H1 (cell line): ENCODE measurements at regions of chr2 and their contacts with region 1.

Region 1: GRCh38 chr2:120958623-120959366 is 223.1 kb downstream of the GLI2 start:
- DNase-seq: peak; percentile 17 to 93
- H3K4me3 ChIP-seq: no peak overlapping the region
- H3K27ac ChIP-seq: no peak overlapping the region
- H3K4me1 ChIP-seq: no peaks in the 10 kb centered on the region
- H3K27me3 ChIP-seq: no peaks in the 10 kb centered on the region
- CTCF ChIP-seq: peak in 2 of 3 experiments; percentile 79 to 83; a peak in 3 of 4 replicates
- EP300 ChIP-seq: no peak
- POLR2A ChIP-seq: no peak
- RAD21 ChIP-seq: peak; percentile 78 to 86

Region 2: DNA sequence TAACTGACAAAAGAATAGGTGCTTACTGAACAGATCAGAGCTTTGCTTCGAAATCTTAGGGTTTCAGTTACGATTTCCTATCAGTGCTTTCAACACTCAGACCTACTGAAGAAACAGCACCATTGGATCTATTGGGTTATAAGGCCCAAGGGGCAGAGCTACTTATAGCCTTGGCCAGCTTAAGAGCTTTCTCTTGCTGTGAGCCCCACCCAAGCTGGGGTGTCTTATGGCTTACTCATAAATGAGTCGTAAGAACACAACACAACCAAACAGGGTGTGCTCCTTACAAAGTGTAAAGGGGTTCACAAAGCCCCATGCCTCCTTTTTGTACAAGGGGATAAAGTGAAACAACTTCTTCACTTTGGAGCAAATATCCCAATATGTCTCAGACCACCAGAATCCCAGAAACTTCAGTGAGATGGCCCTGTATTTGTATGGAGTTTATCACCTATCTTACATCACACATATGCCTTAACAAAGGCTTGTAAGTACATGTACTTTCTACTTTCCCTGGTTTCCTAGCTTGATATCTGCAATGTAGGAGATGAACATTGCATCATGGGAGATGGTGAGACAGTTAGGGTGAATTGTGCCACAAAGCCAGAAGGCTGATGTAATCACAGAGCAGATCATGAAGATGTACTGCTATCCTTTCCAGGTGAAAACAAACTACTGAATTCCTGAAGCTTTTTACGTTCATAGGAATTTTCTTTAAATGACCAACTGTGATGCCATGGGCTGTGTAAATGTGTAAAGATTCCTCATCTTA is 338.6 kb before region 1 on chr2:
- CTCF ChIA-PET with region 1: no interaction called
- POLR2A ChIA-PET with region 1: no interaction called
- DNase-seq: no peak
- H3K4me3 ChIP-seq: no peak overlapping the region
- H3K27ac ChIP-seq: no peak overlapping the region
- H3K4me1 ChIP-seq: no peaks in the 10 kb centered on the region
- H3K27me3 ChIP-seq: peaks cover 0 to 8% (median 1%) of the 10 kb centered on the region in 4 experiments; a peak in 1 of 7 replicates
- CTCF ChIP-seq: no peak
- EP300 ChIP-seq: no peak
- POLR2A ChIP-seq: no peak
- RAD21 ChIP-seq: no peak

Region 3: DNA sequence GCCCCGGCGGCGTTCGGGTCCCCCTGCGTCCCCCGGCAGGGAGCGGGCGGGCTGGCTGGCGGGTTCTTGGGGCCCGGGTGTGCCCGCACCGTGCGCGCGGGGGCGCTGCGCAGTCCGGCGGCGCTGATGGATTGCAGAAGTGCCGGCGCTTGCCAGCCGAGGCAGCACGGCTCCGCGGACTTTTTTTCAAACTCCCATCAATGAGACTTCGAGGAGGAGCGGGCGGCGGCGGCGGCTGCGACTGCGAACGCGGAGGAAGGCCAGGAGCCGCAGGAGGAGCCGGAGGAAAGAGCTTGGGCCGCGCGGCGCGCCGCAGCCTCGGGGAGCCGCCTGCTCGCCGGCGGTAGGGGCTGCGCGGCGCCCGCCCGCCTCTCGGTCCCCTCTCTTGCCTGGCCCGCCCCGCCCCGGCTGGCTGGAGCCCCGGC is 223.0 kb before region 1 on chr2 and contains the start of gene GLI2:
- CTCF ChIA-PET with region 1: interaction called, 17 read pairs
- POLR2A ChIA-PET with region 1: no interaction called
- DNase-seq: peak; percentile 50 to 90
- H3K4me3 ChIP-seq: peak within 1 kb of the TSS; percentile 80 to 91 (median 89)
- H3K27ac ChIP-seq: peak within 1 kb of the TSS; percentile 79; the same call in 1 of the 2 replicates
- H3K4me1 ChIP-seq: peaks cover 12 to 24% (median 16%) of the 10 kb centered on the region in 4 experiments
- H3K27me3 ChIP-seq: no peaks in the 10 kb centered on the region; a peak in 1 of 7 replicates
- CTCF ChIP-seq: peak; percentile 66 to 98 (median 83)
- EP300 ChIP-seq: no peak
- POLR2A ChIP-seq: no peak
- RAD21 ChIP-seq: peak; percentile 60 to 78
- total RNA-seq, gene GLI2: 46.9 and 49.8 TPM in 2 replicates

Region 4: DNA sequence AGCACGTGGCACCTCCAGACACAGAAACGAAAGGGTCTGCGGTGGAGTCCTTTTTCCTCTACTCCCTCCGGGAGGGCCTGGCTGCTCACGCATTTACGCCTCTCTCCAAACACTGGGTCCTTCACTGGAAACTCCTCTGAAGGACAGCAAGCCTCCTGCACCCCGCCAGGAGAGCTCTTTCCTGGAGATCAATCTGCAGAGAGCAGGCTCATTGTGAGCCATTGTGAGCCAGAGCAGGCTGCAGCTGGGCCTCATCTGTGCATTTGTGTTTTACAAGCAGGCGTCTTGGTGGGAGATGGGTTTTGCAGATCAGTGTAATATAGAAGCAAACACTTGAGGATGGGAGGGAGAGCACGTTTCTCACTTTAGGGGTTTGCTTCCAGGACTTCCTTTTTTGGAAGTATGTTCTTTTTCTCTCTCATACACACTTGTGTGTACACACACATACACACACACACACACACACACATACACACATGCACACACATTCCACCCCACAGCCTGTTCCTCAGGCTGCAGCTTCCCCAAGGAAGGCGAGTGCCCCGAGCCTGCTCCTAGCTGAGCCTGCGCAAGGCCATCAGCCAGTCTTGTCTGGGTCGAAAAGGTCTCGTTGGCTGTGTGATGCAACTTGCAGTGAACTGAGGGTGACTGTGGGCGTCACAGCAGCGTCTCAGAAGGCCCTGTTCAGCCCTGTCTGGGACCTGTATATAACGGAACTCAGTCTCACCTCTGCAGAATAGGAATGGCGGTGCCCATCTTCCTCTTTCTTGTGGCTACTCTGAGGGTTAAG is 59.6 kb before region 1 on chr2:
- CTCF ChIA-PET with region 1: interaction called, 16 read pairs
- POLR2A ChIA-PET with region 1: no interaction called
- DNase-seq: no peak
- H3K4me3 ChIP-seq: no peak overlapping the region
- H3K27ac ChIP-seq: no peak overlapping the region; the same call in 1 of the 2 replicates
- H3K4me1 ChIP-seq: peaks cover 18 to 44% (median 28%) of the 10 kb centered on the region in 4 experiments
- H3K27me3 ChIP-seq: no peaks in the 10 kb centered on the region; a peak in 1 of 7 replicates
- CTCF ChIP-seq: no peak
- EP300 ChIP-seq: no peak
- POLR2A ChIP-seq: no peak
- RAD21 ChIP-seq: no peak

Region 5: GRCh38 chr2:120934574-120935340 is 24.0 kb before region 1 on chr2:
- CTCF ChIA-PET with region 1: interaction called, 29 read pairs
- POLR2A ChIA-PET with region 1: no interaction called
- DNase-seq: no peak
- H3K4me3 ChIP-seq: no peak overlapping the region
- H3K27ac ChIP-seq: no peak overlapping the region
- H3K4me1 ChIP-seq: peaks cover 0 to 5% (median 3%) of the 10 kb centered on the region in 4 experiments; a peak in 3 of 7 replicates
- H3K27me3 ChIP-seq: no peaks in the 10 kb centered on the region
- CTCF ChIP-seq: no peak
- EP300 ChIP-seq: no peak
- POLR2A ChIP-seq: no peak
- RAD21 ChIP-seq: no peak

Region 6: DNA sequence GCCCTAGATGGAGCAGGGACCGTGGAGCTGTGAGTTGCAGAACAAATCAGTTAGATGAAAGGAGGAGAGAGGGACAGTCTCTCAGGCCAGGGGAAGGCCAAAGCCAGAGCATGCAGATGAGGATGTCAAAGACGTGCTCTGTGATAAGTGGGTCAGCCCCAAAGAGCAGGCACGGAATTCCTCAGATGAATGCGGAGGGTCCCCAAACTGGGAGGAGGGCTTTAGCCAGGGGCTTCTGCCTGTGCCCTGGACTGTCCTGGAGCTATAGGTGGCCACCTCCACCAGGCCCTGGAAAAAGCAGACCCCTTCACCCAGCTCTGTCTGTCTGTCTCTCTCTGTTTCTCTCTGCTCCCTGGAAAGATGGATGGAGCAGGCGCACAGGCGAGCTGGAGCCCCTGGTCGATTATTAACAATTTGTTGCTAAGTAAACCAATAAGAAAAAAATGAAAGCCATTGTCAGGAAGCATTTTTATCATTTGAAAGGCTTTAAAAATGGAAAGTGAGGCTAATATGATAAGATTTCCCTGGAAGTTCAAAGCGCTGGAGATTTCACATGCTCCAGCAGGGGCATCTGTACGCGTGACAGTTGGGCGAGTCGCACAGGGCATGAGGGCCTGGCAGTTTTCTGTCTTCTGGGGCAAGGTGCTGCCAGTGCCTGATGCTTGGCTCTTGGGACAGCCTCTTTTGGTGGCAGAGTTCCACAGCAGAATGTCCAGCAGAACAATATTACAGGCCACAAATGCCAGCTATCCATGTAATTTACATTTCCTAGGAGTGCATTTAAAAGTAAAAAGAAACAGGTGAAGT is 17.9 kb after region 1 on chr2:
- CTCF ChIA-PET with region 1: interaction called, 15 read pairs
- POLR2A ChIA-PET with region 1: interaction called, 4 read pairs
- DNase-seq: no peak
- H3K4me3 ChIP-seq: no peak overlapping the region
- H3K27ac ChIP-seq: no peak overlapping the region
- H3K4me1 ChIP-seq: 0 out of 7 replicates have a peak, but pooled peaks cover 0 to under 1% (median 0%) of the 10 kb centered on the region in 4 experiments
- H3K27me3 ChIP-seq: no peaks in the 10 kb centered on the region
- CTCF ChIP-seq: no peak
- EP300 ChIP-seq: no peak
- POLR2A ChIP-seq: no peak
- RAD21 ChIP-seq: no peak

Region 7: DNA sequence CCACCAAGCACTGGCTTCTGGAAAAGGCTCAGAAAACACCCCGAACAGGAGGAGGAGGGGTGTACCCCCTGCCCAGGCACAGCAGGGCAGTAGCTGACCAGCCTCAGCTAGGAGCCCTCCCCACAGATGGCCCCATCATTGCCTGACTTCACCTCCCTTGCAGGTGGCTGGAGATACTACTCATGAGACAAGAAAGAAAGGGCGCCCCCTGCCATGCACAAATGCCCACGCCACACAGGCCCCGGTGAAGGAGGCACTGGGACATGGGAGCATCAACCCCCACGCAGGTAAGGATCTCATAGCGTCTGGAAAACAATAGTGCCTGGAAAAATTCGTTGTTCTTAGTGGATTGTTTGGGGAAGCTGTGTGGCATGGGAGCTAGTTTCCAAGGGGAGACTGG is 85.6 kb after region 1 on chr2:
- CTCF ChIA-PET with region 1: interaction called, 10 read pairs
- POLR2A ChIA-PET with region 1: no interaction called
- DNase-seq: peak in 1 of 2 experiments; percentile 68
- H3K4me3 ChIP-seq: no peak overlapping the region
- H3K27ac ChIP-seq: no peak overlapping the region
- H3K4me1 ChIP-seq: no peaks in the 10 kb centered on the region
- H3K27me3 ChIP-seq: no peaks in the 10 kb centered on the region; a peak in 2 of 7 replicates
- CTCF ChIP-seq: peak; percentile 49 to 67 (median 53)
- EP300 ChIP-seq: no peak
- POLR2A ChIP-seq: no peak
- RAD21 ChIP-seq: peak; percentile 35 to 45; a peak in 3 of 4 replicates